Activated T-helper 1 cell treated with anti-CD3 and anti-CD28 coated beads, Interleukin-12 subunit alpha, Interleukin-12 subunit beta, Interleukin-2, Interleukin-4 antibody, amounts not matched to agents 30 ng/mL and 10 ng/mL and 1 ng/mL, durations not matched to agents 14 hours and 24 hours and 36 hours (primary cell): ENCODE measurements at regions of chr11 and their contacts with region 1.

Region 1: GRCh38 chr11:117058761-117059261 is 39.4 kb downstream of the SIK3 start:
- DNase-seq: no peak
- H3K4me3 Mint-ChIP-seq: no peak overlapping the region
- H3K27ac Mint-ChIP-seq: no peak overlapping the region
- H3K4me1 Mint-ChIP-seq: peaks cover 42% of the 10 kb centered on the region
- H3K27me3 Mint-ChIP-seq: no peaks in the 10 kb centered on the region

Region 2: DNA sequence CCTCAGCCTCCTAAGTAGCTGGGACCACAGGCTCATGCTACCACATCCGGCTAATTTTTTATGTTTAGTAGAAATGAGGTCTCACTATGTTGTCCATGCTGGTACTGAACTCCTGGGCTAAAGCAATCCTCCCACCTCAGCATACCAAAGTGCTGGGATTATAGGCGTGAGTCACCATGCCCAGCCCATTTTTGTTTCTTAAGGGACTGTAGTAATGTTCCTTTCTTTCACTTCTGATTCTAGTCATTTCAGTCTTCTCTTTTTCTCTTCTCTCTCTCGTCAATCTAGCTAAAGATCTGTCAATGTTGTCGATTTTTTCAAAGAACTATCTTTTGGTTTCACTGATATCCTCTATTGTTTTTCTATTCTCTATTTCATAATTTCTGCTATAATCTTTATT is 110.4 kb before region 1 on chr11:
- intact Hi-C with region 1: loop called (anchors 1 kb)
- DNase-seq: peak; percentile 10
- H3K4me3 Mint-ChIP-seq: no peak overlapping the region
- H3K27ac Mint-ChIP-seq: peak overlapping the region; percentile 0
- H3K4me1 Mint-ChIP-seq: peaks cover 30% of the 10 kb centered on the region
- H3K27me3 Mint-ChIP-seq: no peaks in the 10 kb centered on the region

Region 3: GRCh38 chr11:117002639-117003299 is 56.0 kb before region 1 on chr11:
- intact Hi-C with region 1: loop called (anchors 2 kb)
- DNase-seq: no peak
- H3K4me3 Mint-ChIP-seq: peak overlapping the region; percentile 26
- H3K27ac Mint-ChIP-seq: peak overlapping the region; percentile 81
- H3K4me1 Mint-ChIP-seq: peaks cover 62% of the 10 kb centered on the region
- H3K27me3 Mint-ChIP-seq: no peaks in the 10 kb centered on the region

Region 4: GRCh38 chr11:117020287-117020686 is 38.5 kb before region 1 on chr11:
- intact Hi-C with region 1: loop called (anchors 1 kb)
- DNase-seq: no peak
- H3K4me3 Mint-ChIP-seq: no peak overlapping the region
- H3K27ac Mint-ChIP-seq: peak overlapping the region; percentile 40
- H3K4me1 Mint-ChIP-seq: peaks cover 58% of the 10 kb centered on the region
- H3K27me3 Mint-ChIP-seq: no peaks in the 10 kb centered on the region

Region 5: GRCh38 chr11:117039900-117040299 is 18.9 kb before region 1 on chr11:
- intact Hi-C with region 1: loop called (anchors 1 kb)
- DNase-seq: no peak
- H3K4me3 Mint-ChIP-seq: no peak overlapping the region
- H3K27ac Mint-ChIP-seq: peak overlapping the region; percentile 11
- H3K4me1 Mint-ChIP-seq: peaks cover 60% of the 10 kb centered on the region
- H3K27me3 Mint-ChIP-seq: no peaks in the 10 kb centered on the region

Region 6: DNA sequence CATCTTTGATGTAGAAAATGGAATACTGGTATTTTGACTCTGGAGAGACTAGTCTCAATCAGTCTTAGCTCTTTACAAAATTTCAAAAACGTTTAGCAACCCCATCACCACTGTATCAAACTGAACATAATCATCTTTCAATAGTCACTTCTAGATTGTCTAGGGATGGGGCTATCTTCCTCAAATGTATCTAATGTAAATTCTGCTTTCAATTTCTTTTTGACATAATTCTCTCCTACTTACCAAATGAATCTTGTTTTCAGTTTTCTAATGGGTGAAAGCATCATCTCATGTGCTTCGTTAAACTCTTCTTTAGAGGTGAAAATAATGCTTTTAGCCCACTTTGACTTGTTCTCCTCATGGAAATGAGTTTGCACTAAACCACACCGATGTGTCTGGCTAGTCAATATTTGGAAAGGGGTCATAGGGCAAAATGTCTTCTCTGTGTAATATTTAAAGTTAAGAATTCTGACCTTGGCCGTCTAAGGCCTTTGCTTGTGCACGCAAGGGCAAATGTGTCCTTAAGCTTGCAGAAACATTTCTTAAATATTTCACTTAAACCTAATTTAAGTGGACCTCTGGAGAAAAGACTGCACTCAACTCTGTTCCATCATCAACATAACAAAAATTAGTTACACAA is 34.3 kb after region 1 on chr11:
- intact Hi-C with region 1: loop called (anchors 1 kb)
- DNase-seq: no peak
- H3K4me3 Mint-ChIP-seq: peak overlapping the region; percentile 53
- H3K27ac Mint-ChIP-seq: peak overlapping the region; percentile 81
- H3K4me1 Mint-ChIP-seq: peaks cover 77% of the 10 kb centered on the region
- H3K27me3 Mint-ChIP-seq: no peaks in the 10 kb centered on the region